ENCODE measurements at regions of chr2 and their contacts with region 1.

Region 1: GRCh38 chr2:23926750-23927571 is at the start of gene ATAD2B:
- DNase-seq: peak; percentile 94
- ATAC-seq: peak; percentile 89
- H3K4me3 Mint-ChIP-seq: peak within 1 kb of the TSS; percentile 98
- H3K27ac Mint-ChIP-seq: peak within 1 kb of the TSS; percentile 99
- H3K4me1 Mint-ChIP-seq: peaks cover 39% of the 10 kb centered on the region
- H3K27me3 Mint-ChIP-seq: no peaks in the 10 kb centered on the region
- total RNA-seq, gene ATAD2B: 28.2 to 32.0 TPM

Region 2: DNA sequence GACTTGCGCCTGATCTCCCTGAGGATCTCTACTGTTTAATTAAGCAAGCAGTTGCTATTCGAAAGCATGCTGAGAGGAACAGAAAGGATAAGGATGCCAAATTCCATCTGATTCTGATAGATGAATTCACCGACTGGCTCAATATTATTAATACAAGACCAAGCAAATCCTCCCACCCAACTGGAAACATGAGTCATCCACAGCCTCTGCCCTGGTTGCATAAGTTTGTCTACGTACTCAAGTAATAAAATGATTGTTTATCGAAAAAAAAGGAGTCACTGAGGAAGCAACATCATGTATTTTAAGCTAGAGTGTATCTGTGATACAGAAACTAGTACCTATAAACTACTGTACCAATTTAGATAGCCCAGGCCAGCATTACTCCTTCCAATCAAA is 26.0 kb before region 1 on chr2:
- CTCF ChIA-PET with region 1: interaction called, 16 read pairs
- POLR2A ChIA-PET with region 1: interaction called, 8 read pairs
- DNase-seq: no peak
- ATAC-seq: no peak
- H3K4me3 Mint-ChIP-seq: no peak overlapping the region
- H3K27ac Mint-ChIP-seq: no peak overlapping the region
- H3K4me1 Mint-ChIP-seq: peaks cover 12% of the 10 kb centered on the region
- H3K27me3 Mint-ChIP-seq: no peaks in the 10 kb centered on the region

Region 3: GRCh38 chr2:23939987-23940717 is 13.2 kb after region 1 on chr2 and contains the start of gene UBXN2A:
- CTCF ChIA-PET with region 1: interaction called, 48 read pairs
- POLR2A ChIA-PET with region 1: interaction called, 145 read pairs
- DNase-seq: peak; percentile 77
- ATAC-seq: peak; percentile 87
- H3K4me3 Mint-ChIP-seq: peak within 1 kb of the TSS; percentile 86
- H3K27ac Mint-ChIP-seq: peak within 1 kb of the TSS; percentile 85
- H3K4me1 Mint-ChIP-seq: peaks cover 26% of the 10 kb centered on the region
- H3K27me3 Mint-ChIP-seq: peaks cover 9% of the 10 kb centered on the region
- total RNA-seq, gene UBXN2A: 13.0 to 14.3 TPM

Region 4: GRCh38 chr2:24058564-24059271 is 131.8 kb after region 1 on chr2:
- CTCF ChIA-PET with region 1: interaction called, 10 read pairs
- POLR2A ChIA-PET with region 1: interaction called, 5 read pairs
- DNase-seq: no peak
- ATAC-seq: no peak
- H3K4me3 Mint-ChIP-seq: no peak overlapping the region
- H3K27ac Mint-ChIP-seq: no peak overlapping the region
- H3K4me1 Mint-ChIP-seq: peaks cover 5% of the 10 kb centered on the region
- H3K27me3 Mint-ChIP-seq: no peaks in the 10 kb centered on the region

Region 5: GRCh38 chr2:24084386-24085361 is 157.7 kb after region 1 on chr2 and contains the start of gene TP53I3:
- CTCF ChIA-PET with region 1: interaction called, 74 read pairs
- POLR2A ChIA-PET with region 1: interaction called, 22 read pairs
- DNase-seq: peak; percentile 84
- ATAC-seq: peak; percentile 97
- H3K4me3 Mint-ChIP-seq: peak within 1 kb of the TSS; percentile 88
- H3K27ac Mint-ChIP-seq: peak within 1 kb of the TSS; percentile 92
- H3K4me1 Mint-ChIP-seq: peaks cover 19% of the 10 kb centered on the region
- H3K27me3 Mint-ChIP-seq: no peaks in the 10 kb centered on the region
- total RNA-seq, gene TP53I3: 5.3 to 6.5 TPM